AG04449 (cell line): ENCODE measurements at regions of chr17 and their contacts with region 1.

Region 1: GRCh38 chr17:41548844-41549595 is 20.9 kb upstream of the KRT19 start:
- DNase-seq: peak; percentile 38
- H3K4me3 ChIP-seq: peak overlapping the region; percentile 19
- CTCF ChIP-seq: peak; percentile 99

Region 2: DNA sequence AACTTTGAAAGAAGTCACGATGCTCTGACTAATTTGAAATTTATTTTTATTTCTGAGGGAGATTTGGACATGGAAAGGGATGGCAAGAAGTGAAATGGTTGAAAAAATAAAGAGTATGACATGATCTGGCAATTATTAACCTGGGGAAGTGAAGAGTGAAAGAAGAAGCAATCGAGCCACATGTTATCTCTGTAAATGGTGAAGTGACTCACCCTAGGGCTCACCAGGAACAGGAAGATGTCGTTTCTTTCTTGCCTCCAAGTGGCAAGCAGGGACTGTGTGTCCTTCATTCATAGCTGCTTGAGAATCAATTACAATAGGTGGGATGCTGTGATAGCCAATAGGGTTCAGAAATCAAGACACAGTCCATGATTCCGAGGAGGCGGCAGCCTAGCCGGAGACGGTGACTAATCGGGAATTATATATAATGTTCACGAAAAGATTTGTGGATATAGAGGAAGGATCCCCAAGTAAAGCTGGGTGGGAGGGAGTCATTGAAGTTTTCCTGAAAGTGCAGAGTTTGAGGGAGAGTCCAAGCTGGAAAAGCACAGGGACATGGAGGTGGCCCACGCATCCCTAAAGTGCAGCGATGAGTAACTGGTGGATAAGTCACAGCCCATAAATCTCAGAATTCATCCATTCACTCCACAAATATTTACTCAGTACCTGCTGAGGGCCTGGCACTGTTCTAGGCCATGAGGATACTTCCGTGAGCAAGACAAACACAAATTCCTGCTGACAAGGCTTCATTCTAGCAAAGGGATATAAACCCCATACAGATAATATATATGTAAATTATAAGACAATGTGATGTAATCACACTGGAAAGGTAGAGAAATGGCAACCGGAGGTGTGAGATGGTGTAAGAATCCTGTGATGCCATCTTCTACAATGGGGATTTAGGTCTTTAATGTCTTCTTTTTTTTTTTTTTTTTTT is 645.6 kb before region 1 on chr17:
- CTCF ChIA-PET with region 1: interaction called, 44 read pairs
- POLR2A ChIA-PET with region 1: no interaction called
- DNase-seq: no peak
- H3K4me3 ChIP-seq: peak overlapping the region; percentile 2
- CTCF ChIP-seq: no peak

Region 3: DNA sequence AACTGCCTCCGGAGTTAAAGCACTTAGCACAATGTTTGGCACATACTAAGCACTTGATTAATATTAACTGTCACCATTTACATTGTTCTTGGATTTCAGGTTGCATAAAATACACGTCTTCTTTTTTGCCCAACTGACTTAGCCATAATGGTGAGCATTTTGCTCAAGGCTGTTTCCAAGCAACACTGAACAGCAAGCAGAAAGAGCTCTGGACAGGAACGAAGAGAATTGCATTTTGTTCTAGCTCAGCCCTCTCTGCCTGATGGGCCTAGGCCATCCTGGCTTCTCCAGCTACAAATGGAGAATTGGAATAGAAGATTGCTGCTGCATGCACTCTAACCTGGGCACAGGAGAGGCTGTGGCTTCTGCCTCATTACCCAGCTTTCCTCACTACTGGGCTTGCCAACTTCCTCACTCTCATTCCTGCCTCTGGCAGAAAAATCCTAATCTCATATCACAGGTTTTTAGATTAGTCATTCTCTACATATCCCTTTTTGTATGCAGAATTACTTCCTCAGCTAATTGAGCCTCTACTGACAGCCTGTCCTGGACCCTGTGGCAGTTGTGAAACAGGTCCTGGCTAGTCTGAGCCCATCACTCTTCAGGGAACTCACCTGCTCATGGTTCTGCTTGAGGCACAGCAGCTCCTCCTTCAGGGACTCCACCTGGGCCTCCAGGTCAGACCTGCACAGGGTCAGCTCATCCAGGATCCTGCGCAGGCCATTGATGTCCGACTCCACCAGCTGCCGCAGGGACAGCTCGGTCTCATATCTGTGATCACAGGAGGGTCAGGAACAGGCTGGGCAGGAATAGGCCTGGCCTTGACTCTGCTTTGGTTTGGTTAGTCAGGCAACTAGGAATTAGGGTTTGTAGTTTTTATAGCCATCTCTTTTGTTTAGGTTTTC is 200.9 kb before region 1 on chr17:
- CTCF ChIA-PET with region 1: interaction called, 12 read pairs
- POLR2A ChIA-PET with region 1: no interaction called
- DNase-seq: no peak
- H3K4me3 ChIP-seq: no peak overlapping the region
- CTCF ChIP-seq: no peak

Region 4: DNA sequence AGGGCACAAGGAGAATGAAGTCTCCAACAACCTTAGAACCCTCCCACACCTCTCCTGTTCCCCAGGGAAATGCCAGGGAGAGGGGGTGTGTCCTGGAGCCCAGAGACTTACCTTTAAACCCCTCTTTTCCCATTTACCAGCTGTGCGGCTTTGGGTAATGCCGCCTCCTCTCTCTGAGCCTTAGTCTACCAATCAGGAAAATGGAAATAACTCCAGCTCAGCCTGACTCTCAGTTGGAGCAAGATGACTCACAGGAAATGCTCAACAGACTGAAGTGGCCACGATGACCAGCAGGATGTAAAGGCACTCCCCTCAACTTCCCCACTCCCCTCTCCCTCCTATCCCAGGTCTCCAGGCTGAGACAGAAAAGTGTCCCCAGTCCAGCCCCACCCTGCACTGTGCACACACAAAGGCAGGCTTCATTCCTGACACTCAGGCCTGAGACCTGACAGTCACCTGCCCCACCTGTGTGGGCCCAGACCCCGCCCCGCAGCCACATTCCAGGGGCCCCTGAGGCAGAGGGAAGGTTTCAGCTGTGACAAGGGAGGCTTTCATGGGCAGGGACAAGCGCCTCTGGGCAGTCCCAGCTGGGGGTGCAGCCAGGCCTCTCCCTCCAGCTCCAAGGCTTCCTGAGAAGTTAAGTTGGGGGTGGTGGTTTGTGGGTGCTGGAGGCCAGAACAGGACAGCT is 27.3 kb before region 1 on chr17:
- CTCF ChIA-PET with region 1: interaction called, 29 read pairs
- POLR2A ChIA-PET with region 1: interaction called, 3 read pairs
- DNase-seq: peak; percentile 37
- H3K4me3 ChIP-seq: no peak overlapping the region
- CTCF ChIP-seq: no peak

Region 5: GRCh38 chr17:41579484-41580243 is 30.6 kb after region 1 on chr17:
- CTCF ChIA-PET with region 1: interaction called, 23 read pairs
- POLR2A ChIA-PET with region 1: no interaction called
- DNase-seq: no peak
- H3K4me3 ChIP-seq: no peak overlapping the region
- CTCF ChIP-seq: peak; percentile 83

Region 6: GRCh38 chr17:41665566-41666236 is 116.7 kb after region 1 on chr17:
- CTCF ChIA-PET with region 1: interaction called, 604 read pairs
- POLR2A ChIA-PET with region 1: interaction called, 5 read pairs
- DNase-seq: no peak
- H3K4me3 ChIP-seq: peak overlapping the region; percentile 55
- CTCF ChIP-seq: peak; percentile 90